Heart right ventricle (tissue), 16 donors: ENCODE measurements at regions of chr16 and their contacts with region 1.

Region 1: GRCh38 chr16:4511441-4512082 is 27.0 kb downstream of the CDIP1 start:
- DNase-seq: peak; percentile 45 to 54
- ATAC-seq: peak; percentile 45 to 66 (median 58)
- H3K4me3 ChIP-seq: no peak overlapping the region
- H3K27ac ChIP-seq: peak overlapping the region; percentile 34 to 87 (median 56)
- H3K4me1 ChIP-seq: peaks cover 26 to 64% (median 55%) of the 10 kb centered on the region in 9 donors
- H3K27me3 ChIP-seq: no peaks in the 10 kb centered on the region
- CTCF ChIP-seq: peak; percentile 17 to 64 (median 58)

Region 2: DNA sequence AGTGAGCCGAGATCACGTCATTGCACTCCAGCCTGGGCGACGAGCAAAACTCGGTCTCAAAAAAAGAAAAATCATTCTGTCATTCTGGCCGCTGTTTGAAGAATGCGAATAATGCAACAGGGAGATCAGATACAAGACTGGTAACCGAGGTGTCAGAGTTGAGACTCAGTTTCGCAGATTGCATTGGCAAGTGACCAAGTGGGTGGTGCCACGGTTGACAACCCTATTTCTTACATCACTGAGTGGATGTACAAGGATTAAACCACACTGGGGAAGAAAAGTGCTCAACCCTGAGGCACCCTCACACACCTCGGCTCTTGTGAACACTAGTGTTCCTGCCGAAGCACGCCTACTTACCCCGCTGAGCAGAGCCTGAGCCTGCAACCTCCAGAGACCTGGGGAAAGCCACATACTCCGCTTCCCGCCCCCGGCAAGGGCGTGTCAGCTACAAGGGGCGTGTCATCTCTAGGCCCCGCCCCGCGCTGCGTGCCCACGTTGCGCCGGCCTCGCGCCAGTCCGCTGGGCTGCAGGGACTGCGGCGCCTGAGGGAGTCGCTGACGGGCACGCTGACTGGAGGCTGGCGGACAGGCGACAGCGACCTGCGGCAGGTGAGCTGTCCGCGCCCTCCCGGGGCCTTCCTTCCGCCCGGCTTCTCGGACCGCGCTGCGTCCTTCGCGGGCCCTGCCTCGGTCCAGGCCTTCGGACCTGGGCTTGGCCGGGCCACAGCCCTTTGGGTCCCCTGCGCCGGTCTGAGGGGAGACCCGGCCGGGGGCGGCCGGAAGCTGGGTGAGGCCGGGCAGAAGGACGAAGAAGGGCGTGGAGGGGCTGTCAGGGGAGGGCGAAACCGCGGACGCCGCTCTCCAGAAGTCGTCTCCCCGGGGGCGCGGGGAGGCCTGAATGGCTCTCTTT is 35.4 kb before region 1 on chr16 and contains the start of gene HMOX2:
- intact Hi-C with region 1: no loop called
- DNase-seq: peak; percentile 90 to 95
- ATAC-seq: peak; percentile 94 to 96 (median 96)
- H3K4me3 ChIP-seq: peak within 1 kb of the TSS; percentile 82 to 99 (median 93)
- H3K27ac ChIP-seq: peak within 1 kb of the TSS; percentile 87 to 97 (median 94)
- H3K4me1 ChIP-seq: peaks cover 4 to 49% (median 35%) of the 10 kb centered on the region in 9 donors
- H3K27me3 ChIP-seq: no peaks in the 10 kb centered on the region
- CTCF ChIP-seq: peak in 8 of 9 donors; percentile 26 to 72 (median 44)
- total RNA-seq, gene HMOX2: 58.4 to 207 (median 84.8) TPM

Region 3: DNA sequence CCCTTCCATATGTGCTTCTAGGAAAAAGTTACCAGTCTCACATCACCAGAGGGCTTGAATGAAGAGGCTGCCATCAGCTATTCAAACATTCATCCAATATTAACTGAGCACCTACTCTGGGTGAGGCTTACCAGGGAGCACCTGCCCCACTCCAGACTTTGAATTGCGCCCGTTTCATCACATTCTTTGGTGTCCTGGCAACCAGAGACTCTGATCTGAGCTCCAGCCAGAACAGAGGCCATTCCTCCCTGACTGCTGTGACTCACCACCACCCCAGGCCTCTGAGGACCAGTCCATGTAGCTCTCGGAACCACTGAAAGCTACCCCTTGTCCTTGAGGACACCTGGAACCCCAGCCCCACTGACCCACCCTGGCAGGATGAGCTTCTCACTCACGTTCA is 44.5 kb after region 1 on chr16 and contains the start of gene C16orf96:
- intact Hi-C with region 1: no loop called
- DNase-seq: no peak
- ATAC-seq: no peak
- H3K4me3 ChIP-seq: no peak within 1 kb of the TSS
- H3K27ac ChIP-seq: no peak within 1 kb of the TSS
- H3K4me1 ChIP-seq: no peaks in the 10 kb centered on the region
- H3K27me3 ChIP-seq: no peaks in the 10 kb centered on the region
- CTCF ChIP-seq: no peak
- total RNA-seq, gene C16orf96: 0.06 to 0.21 (median 0.09) TPM

Region 4: GRCh38 chr16:4580245-4580644 is 68.7 kb after region 1 on chr16:
- intact Hi-C with region 1: loop called in 4 of 10 experiments (anchors 5 to 10 kb)
- DNase-seq: no peak
- ATAC-seq: no peak
- H3K4me3 ChIP-seq: no peak overlapping the region
- H3K27ac ChIP-seq: no peak overlapping the region
- H3K4me1 ChIP-seq: no peaks in the 10 kb centered on the region
- H3K27me3 ChIP-seq: no peaks in the 10 kb centered on the region
- CTCF ChIP-seq: no peak